ENCODE measurements at regions of chr14 and their contacts with region 1.

Region 1: GRCh38 chr14:49692811-49693734 is at the start of gene KLHDC1:
- DNase-seq: peak; percentile 33
- H3K4me3 ChIP-seq: peak within 1 kb of the TSS; percentile 53 to 79 (median 66)
- H3K27ac ChIP-seq: peak within 1 kb of the TSS; percentile 10
- H3K4me1 ChIP-seq: peaks cover 10% of the 10 kb centered on the region
- H3K27me3 ChIP-seq: no peaks in the 10 kb centered on the region
- CTCF ChIP-seq: no peak
- total RNA-seq, gene KLHDC1: 0.52 to 2.0 TPM

Region 2: DNA sequence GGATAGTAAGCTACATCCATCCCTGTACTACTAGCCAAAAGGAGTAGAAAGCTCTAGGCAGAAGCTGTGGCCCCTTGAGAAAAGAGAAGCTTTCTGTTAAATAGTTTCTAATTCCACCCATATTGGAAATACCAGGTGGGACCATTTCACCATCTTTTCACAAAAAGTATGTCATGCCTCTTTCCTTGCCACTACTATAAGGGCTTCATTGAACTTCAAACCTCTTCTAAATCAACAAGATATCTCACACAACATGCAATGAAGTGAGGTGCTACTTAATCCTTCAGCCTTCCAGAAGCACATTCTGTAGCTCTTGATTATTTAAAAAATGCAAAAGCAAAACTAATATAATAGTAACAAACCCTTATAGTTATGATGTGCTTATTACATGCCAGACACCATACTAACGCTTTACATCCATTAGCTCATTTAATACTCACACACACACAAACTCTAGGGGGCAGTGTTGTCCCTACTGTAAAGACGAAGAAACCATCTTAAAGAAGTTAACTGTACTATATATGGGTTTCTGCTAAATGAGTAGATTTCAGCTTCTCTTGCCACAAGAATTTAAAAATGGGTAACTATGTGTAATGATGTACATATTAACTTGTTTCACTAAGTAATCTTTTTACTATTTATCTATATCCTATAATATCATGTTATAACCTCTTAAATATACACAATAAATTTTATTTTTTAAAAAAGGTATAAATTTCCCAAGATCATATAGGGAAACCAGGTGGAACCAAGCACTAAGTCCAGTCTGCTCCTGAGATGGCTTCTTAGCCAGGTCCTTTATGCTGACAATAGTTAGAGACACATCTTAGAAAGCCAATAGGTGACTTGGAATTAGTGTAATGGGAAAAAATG is 231.3 kb before region 1 on chr14:
- CTCF ChIA-PET with region 1: no interaction called
- dilution Hi-C with region 1: no loop called
- in situ Hi-C with region 1: no loop called
- intact Hi-C with region 1: no loop called
- DNase-seq: peak; percentile 66
- H3K4me3 ChIP-seq: no peak overlapping the region
- H3K27ac ChIP-seq: no peak overlapping the region
- H3K4me1 ChIP-seq: no peaks in the 10 kb centered on the region
- H3K27me3 ChIP-seq: no peaks in the 10 kb centered on the region
- CTCF ChIP-seq: peak; percentile 76 to 77

Region 3: DNA sequence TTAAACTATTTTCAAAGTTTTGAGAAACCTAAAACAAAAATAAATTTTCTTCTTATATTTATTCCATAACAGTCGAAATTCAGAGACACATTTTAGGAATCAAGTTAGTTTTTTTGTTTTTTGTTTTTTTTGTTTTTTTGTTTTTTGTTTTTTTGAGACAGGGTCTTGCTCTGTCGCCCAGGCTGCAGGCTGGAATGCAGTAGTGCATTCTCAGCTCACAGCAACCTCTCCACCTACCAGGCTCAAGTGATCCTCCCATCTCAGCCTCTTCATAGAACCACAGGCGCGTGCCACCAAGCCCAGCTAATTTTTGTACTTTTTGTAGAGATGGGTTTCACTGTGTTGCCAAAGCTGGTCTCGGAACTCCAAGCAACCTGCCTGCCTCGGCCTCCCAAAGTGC is 39.6 kb before region 1 on chr14:
- CTCF ChIA-PET with region 1: no interaction called
- dilution Hi-C with region 1: loop called (anchors 5 kb)
- in situ Hi-C with region 1: no loop called
- intact Hi-C with region 1: no loop called
- DNase-seq: no peak
- H3K4me3 ChIP-seq: no peak overlapping the region
- H3K27ac ChIP-seq: no peak overlapping the region
- H3K4me1 ChIP-seq: peaks cover 9% of the 10 kb centered on the region
- H3K27me3 ChIP-seq: no peaks in the 10 kb centered on the region
- CTCF ChIP-seq: no peak

Region 4: GRCh38 chr14:50501642-50502041 is 808.6 kb after region 1 on chr14:
- CTCF ChIA-PET with region 1: no interaction called
- dilution Hi-C with region 1: no loop called
- in situ Hi-C with region 1: no loop called
- intact Hi-C with region 1: no loop called
- DNase-seq: peak; percentile 70
- H3K4me3 ChIP-seq: no peak overlapping the region
- H3K27ac ChIP-seq: peak overlapping the region; percentile 75
- H3K4me1 ChIP-seq: peaks cover 18% of the 10 kb centered on the region
- H3K27me3 ChIP-seq: no peaks in the 10 kb centered on the region
- CTCF ChIP-seq: no peak

Measured in mammary epithelial cell (primary cell).